ENCODE measurements at regions of chr10 and their contacts with region 1.

Region 1: DNA sequence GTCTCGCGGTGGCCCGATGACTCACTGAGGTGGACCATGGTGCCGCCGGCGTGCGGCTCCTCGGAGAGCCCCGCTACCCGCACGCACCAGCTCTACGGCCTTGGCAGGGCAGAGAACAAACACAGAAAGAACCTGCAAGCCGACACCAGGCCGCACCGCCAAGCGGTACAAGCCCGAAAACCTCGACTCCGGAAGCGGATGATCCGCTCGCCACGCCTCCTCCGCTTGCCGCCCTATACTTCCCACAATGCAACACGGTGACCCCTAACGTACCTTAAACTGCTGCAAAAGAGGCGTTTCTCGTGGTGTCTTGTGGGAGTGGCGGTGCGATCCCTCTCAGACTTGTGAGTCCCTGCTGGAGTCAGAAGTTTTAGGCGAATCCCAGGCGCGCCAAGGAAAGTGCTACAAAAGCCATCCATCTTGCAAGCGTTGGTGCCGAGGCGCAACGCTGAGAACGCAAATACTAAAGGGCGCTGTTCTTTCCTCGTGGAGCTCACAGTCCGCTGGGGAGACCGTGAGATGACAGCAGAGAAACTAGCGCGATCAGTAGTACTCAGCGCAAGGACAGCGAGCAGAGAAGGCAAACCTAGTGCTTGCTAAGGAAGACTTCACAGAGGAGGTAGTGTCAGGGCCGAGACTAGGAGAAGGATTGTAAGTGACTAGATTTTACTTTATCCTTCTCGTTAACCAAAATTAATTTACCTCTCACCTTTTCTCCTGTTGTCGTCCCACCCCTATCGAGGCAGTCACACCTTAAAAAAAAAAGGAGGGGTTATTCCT is at the start of gene MRPS16:
- DNase-seq: peak; percentile 96
- ATAC-seq: peak; percentile 89
- H3K4me3 Mint-ChIP-seq: peak within 1 kb of the TSS; percentile 93
- H3K27ac Mint-ChIP-seq: peak within 1 kb of the TSS; percentile 98
- H3K4me1 Mint-ChIP-seq: peaks cover 35% of the 10 kb centered on the region
- H3K27me3 Mint-ChIP-seq: no peaks in the 10 kb centered on the region
- CTCF ChIP-seq: peak; percentile 5
- total RNA-seq, gene MRPS16: 127 to 132 TPM

Region 2: GRCh38 chr10:73238990-73239566 is 13.6 kb before region 1 on chr10:
- CTCF ChIA-PET with region 1: no interaction called
- POLR2A ChIA-PET with region 1: interaction called, 33 read pairs
- intact Hi-C with region 1: no loop called
- DNase-seq: no peak
- ATAC-seq: no peak
- H3K4me3 Mint-ChIP-seq: no peak overlapping the region
- H3K27ac Mint-ChIP-seq: no peak overlapping the region
- H3K4me1 Mint-ChIP-seq: peaks cover 12% of the 10 kb centered on the region
- H3K27me3 Mint-ChIP-seq: no peaks in the 10 kb centered on the region
- CTCF ChIP-seq: no peak

Region 3: GRCh38 chr10:73413528-73414229 is 161.0 kb after region 1 on chr10 and contains the start of gene ANXA7:
- CTCF ChIA-PET with region 1: interaction called, 4 read pairs
- POLR2A ChIA-PET with region 1: interaction called, 12 read pairs
- intact Hi-C with region 1: no loop called
- DNase-seq: peak; percentile 97
- ATAC-seq: peak; percentile 96
- H3K4me3 Mint-ChIP-seq: peak within 1 kb of the TSS; percentile 92
- H3K27ac Mint-ChIP-seq: peak within 1 kb of the TSS; percentile 92
- H3K4me1 Mint-ChIP-seq: peaks cover 46% of the 10 kb centered on the region
- H3K27me3 Mint-ChIP-seq: peaks cover 2% of the 10 kb centered on the region
- CTCF ChIP-seq: no peak
- total RNA-seq, gene ANXA7: 101 to 103 TPM